ENCODE measurements at regions of chr18 and their contacts with region 1.

Region 1: GRCh38 chr18:59249205-59249774 is 24.0 kb downstream of the RAX start:
- DNase-seq: no peak
- H3K4me3 Mint-ChIP-seq: no peak overlapping the region
- H3K27ac Mint-ChIP-seq: no peak overlapping the region
- H3K4me1 Mint-ChIP-seq: no peaks in the 10 kb centered on the region
- H3K27me3 Mint-ChIP-seq: peaks cover 37% of the 10 kb centered on the region

Region 2: DNA sequence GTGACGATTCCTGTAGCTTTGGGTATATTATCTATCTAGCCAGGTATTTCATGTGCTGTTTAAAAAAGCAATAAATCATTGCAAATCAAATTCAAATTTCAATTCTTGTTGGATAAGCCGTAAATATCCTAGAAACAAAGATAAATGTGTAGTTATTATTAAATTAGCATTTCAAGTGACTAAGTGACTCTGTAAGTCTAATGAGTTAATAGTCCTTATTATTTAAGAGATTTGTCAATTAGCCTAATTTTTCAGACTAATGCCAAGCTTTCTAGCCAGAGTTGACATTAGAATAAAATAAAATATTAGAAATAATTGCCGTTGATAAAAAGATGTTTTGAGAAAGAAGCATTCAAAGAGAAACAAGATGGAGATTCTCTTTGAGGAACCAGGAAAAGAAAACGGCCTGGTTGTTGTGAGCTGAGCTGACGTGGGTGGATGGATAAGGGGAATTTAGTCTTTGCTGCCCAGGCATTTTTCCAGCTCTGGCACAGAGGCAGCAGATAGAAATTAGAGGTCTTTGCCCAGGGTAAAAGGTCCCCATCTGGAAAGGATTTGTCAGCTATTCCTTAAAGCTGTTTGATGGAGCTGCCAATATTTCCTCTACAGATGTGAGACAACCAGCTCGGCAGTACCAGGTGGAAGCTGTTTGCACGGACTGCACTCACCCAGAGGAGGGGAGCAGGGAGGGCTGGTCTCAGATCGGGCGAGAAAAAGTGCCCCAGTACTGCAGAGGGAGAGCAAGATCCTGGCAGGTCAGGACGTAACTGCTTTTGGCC is 226.9 kb before region 1 on chr18:
- intact Hi-C with region 1: no loop called
- DNase-seq: no peak
- H3K4me3 Mint-ChIP-seq: no peak overlapping the region
- H3K27ac Mint-ChIP-seq: no peak overlapping the region
- H3K4me1 Mint-ChIP-seq: peaks cover 3% of the 10 kb centered on the region
- H3K27me3 Mint-ChIP-seq: peaks cover 4% of the 10 kb centered on the region

Region 3: GRCh38 chr18:59200787-59201186 is 48.5 kb before region 1 on chr18:
- intact Hi-C with region 1: no loop called
- DNase-seq: no peak
- H3K4me3 Mint-ChIP-seq: no peak overlapping the region
- H3K27ac Mint-ChIP-seq: no peak overlapping the region
- H3K4me1 Mint-ChIP-seq: no peaks in the 10 kb centered on the region
- H3K27me3 Mint-ChIP-seq: peaks cover 30% of the 10 kb centered on the region

Region 4: GRCh38 chr18:59286341-59286740 is 37.1 kb after region 1 on chr18:
- intact Hi-C with region 1: no loop called
- DNase-seq: no peak
- H3K4me3 Mint-ChIP-seq: no peak overlapping the region
- H3K27ac Mint-ChIP-seq: no peak overlapping the region
- H3K4me1 Mint-ChIP-seq: no peaks in the 10 kb centered on the region
- H3K27me3 Mint-ChIP-seq: peaks cover 56% of the 10 kb centered on the region

Region 5: DNA sequence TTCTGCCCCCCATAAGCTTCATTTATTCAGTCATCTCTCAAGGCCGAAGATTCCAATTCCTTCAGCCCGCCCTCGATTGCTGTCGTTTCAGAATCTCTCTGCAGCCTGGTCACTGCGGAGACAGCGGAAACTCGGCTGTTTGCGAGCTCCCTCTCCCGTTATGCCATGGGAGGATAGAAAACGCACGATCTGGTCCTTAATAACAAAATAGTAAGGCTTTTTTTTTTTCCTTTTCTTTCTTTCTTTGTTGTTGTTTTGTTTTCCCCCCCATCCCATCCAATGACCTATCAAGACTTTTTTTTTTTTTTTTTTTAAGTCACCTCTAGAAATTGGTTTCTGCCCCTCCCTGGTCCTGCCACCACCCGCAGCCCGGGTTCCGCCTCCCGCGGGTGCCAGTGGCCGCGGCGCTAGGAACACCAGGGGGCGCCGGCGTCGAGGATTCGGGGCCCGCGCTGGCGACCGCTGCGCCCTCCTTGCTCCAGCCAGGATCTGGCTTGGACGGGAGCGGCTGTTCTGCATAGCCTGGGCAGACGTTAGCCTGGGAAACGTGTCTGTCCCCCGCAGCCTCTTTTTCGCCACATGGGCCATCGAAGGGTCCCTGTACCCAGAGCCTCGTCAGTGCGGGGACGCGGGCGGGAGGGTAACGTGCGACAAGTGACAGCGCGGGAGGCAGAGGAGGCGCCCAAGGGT is 59.1 kb after region 1 on chr18:
- intact Hi-C with region 1: loop called (anchors 1 kb)
- DNase-seq: peak; percentile 54
- H3K4me3 Mint-ChIP-seq: peak overlapping the region; percentile 50
- H3K27ac Mint-ChIP-seq: no peak overlapping the region
- H3K4me1 Mint-ChIP-seq: peaks cover 3% of the 10 kb centered on the region
- H3K27me3 Mint-ChIP-seq: peaks cover 45% of the 10 kb centered on the region

Region 6: GRCh38 chr18:59566533-59566971 is 317.3 kb after region 1 on chr18:
- intact Hi-C with region 1: no loop called
- DNase-seq: no peak
- H3K4me3 Mint-ChIP-seq: no peak overlapping the region
- H3K27ac Mint-ChIP-seq: no peak overlapping the region
- H3K4me1 Mint-ChIP-seq: no peaks in the 10 kb centered on the region
- H3K27me3 Mint-ChIP-seq: peaks cover 3% of the 10 kb centered on the region

Measured in activated T-helper 2 cell treated with anti-CD3 and anti-CD28 coated beads, Interferon-gamma antibody, Interleukin-2, Interleukin-4, amounts not matched to agents 10 μg/mL and 5 μg/mL and 100 μg/mL, durations not matched to agents 14 hours and 24 hours and 36 hours (primary cell).